ENCODE measurements at regions of chr9 and their contacts with region 1.

Region 1: DNA sequence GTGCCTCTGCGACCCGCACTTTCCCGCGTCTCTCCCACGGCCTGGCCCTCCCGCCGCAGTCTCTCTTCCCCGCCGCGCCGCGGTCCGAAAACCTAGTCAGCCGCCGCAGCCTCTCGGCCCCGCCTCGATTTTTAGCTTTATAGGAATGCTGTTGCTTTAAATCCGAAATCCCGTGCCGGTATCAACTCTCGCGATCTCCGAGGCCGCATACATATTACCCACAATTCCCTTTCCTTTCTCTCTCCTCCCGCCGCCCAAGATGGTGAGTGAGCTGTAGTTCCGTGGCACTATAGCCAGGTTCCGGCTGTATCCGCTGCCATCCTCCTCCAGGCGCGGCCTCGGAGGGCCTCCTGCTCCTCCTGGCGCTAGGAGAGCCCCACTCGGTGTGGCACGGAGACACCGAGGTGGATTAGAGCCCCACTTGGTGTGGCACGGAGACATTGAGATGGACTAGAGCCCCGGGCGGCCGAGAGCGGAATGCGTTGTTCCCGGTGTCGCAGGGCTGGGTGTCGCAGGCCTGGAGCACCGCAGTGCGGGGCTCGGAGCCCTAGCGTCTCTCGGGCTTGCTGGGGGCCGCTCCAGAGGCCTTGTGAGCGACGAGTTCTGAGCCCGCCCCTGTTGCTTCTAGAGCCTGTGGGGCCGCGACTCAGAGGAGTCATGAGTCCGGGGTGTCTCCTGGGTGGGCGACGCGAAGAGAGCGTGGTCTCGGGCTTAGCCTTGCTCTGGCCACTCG is at the starts of genes MED22 and RPL7A:
- DNase-seq: peak; percentile 95
- H3K4me3 Mint-ChIP-seq: peak within 1 kb of the TSS; percentile 95
- H3K27ac Mint-ChIP-seq: peak within 1 kb of the TSS; percentile 86
- H3K4me1 Mint-ChIP-seq: peaks cover 54% of the 10 kb centered on the region
- H3K27me3 Mint-ChIP-seq: no peaks in the 10 kb centered on the region
- total RNA-seq, gene MED22: 21.1 to 23.3 TPM
- total RNA-seq, gene RPL7A: 1,627 to 1,632 TPM

Region 2: GRCh38 chr9:133335878-133336811 is 12.0 kb before region 1 on chr9 and contains the start of gene SURF6:
- CTCF ChIA-PET with region 1: interaction called, 7 read pairs
- POLR2A ChIA-PET with region 1: interaction called, 31 read pairs
- DNase-seq: peak; percentile 94
- H3K4me3 Mint-ChIP-seq: peak within 1 kb of the TSS; percentile 86
- H3K27ac Mint-ChIP-seq: peak within 1 kb of the TSS; percentile 88
- H3K4me1 Mint-ChIP-seq: peaks cover 51% of the 10 kb centered on the region
- H3K27me3 Mint-ChIP-seq: no peaks in the 10 kb centered on the region
- total RNA-seq, gene SURF6: 9.3 to 10.9 TPM

Region 3: GRCh38 chr9:133362359-133363044 is 14.4 kb after region 1 on chr9:
- CTCF ChIA-PET with region 1: interaction called, 4 read pairs
- POLR2A ChIA-PET with region 1: interaction called, 25 read pairs
- DNase-seq: no peak
- H3K4me3 Mint-ChIP-seq: no peak overlapping the region
- H3K27ac Mint-ChIP-seq: no peak overlapping the region
- H3K4me1 Mint-ChIP-seq: peaks cover 40% of the 10 kb centered on the region
- H3K27me3 Mint-ChIP-seq: no peaks in the 10 kb centered on the region

Region 4: DNA sequence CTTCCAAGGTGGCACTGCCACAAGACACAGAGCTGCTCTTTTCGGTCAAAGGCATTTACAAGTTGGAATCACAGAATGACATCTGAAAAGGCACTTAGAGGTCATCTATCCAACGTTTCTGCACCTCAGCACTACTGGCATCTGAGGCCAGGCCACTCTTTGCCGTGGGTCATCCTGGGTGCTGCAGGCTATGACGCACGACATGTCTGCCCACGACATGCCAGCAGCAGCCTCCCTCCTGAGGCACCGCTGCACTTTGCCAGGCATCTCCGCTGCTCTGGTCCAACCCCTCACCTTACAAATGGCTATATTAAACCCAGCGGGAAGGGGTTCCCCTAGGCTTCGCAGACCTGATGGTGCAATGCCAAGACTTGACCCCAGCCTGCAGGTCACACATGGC is 19.6 kb after region 1 on chr9:
- CTCF ChIA-PET with region 1: interaction called, 59 read pairs
- POLR2A ChIA-PET with region 1: interaction called, 397 read pairs
- DNase-seq: no peak
- H3K4me3 Mint-ChIP-seq: no peak overlapping the region
- H3K27ac Mint-ChIP-seq: no peak overlapping the region
- H3K4me1 Mint-ChIP-seq: peaks cover 55% of the 10 kb centered on the region
- H3K27me3 Mint-ChIP-seq: no peaks in the 10 kb centered on the region

Region 5: DNA sequence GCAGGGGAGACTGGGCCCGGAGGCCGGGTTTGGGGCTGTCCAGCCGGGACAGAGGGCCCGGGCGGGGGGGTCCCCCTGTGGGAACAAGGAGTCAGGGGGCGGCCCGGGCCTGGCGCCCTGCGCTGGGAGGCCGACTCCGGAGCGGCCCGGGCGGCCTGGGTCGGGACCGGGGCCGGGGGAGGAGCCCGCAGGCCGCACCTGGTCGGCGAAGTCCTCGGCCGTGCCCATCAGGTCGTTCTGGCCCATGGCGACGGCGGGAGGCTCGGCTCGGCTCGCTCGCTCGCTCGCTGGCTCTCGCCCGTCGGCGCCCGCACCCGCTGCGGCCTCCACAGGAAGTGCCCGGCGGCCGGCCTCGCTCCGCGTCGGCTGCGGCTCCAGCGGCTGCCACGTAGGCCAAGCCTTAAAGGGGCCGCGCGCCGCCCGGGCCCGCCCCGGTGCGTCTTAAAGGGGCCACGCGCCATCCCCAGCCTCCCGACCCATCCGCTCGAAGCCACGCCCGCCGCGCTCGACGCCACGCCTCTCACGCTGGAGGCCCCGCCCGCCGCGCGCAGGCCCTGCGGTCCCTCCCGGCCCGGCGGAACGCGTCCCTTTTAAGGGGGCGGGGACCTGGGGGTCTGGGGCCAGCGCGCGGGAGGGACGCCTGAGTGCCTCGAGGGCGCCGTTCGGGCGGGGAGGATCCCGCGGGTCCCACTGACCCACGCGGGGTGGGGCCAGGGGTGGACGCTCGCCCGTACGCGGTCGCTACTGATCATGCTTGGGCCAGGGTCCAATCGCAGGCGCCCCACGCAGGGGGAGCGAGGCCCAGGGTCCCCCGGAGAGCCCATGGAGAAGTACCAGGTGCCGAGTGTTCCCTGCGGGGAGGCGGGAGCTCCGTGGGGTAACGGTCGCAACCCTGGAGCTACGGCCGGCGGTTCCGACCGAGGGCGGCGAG is 27.8 kb after region 1 on chr9 and contains the starts of genes STKLD1 and SURF4:
- CTCF ChIA-PET with region 1: interaction called, 59 read pairs
- POLR2A ChIA-PET with region 1: interaction called, 397 read pairs
- DNase-seq: peak; percentile 96
- H3K4me3 Mint-ChIP-seq: peak within 1 kb of the TSS; percentile 83
- H3K27ac Mint-ChIP-seq: peak within 1 kb of the TSS; percentile 97
- H3K4me1 Mint-ChIP-seq: peaks cover 36% of the 10 kb centered on the region
- H3K27me3 Mint-ChIP-seq: peaks cover 2% of the 10 kb centered on the region
- total RNA-seq, gene STKLD1: 0.65 to 0.71 TPM
- total RNA-seq, gene SURF4: 249 to 260 TPM

Region 6: GRCh38 chr9:133417541-133418461 is 69.7 kb after region 1 on chr9 and contains the start of gene REXO4:
- CTCF ChIA-PET with region 1: no interaction called
- POLR2A ChIA-PET with region 1: interaction called, 15 read pairs
- DNase-seq: peak; percentile 89
- H3K4me3 Mint-ChIP-seq: peak within 1 kb of the TSS; percentile 92
- H3K27ac Mint-ChIP-seq: peak within 1 kb of the TSS; percentile 87
- H3K4me1 Mint-ChIP-seq: peaks cover 59% of the 10 kb centered on the region
- H3K27me3 Mint-ChIP-seq: no peaks in the 10 kb centered on the region
- total RNA-seq, gene REXO4: 19.7 to 21.7 TPM